Breast epithelium (tissue), 4 donors: ENCODE measurements at regions of chr18 and their contacts with region 1.

Region 1: DNA sequence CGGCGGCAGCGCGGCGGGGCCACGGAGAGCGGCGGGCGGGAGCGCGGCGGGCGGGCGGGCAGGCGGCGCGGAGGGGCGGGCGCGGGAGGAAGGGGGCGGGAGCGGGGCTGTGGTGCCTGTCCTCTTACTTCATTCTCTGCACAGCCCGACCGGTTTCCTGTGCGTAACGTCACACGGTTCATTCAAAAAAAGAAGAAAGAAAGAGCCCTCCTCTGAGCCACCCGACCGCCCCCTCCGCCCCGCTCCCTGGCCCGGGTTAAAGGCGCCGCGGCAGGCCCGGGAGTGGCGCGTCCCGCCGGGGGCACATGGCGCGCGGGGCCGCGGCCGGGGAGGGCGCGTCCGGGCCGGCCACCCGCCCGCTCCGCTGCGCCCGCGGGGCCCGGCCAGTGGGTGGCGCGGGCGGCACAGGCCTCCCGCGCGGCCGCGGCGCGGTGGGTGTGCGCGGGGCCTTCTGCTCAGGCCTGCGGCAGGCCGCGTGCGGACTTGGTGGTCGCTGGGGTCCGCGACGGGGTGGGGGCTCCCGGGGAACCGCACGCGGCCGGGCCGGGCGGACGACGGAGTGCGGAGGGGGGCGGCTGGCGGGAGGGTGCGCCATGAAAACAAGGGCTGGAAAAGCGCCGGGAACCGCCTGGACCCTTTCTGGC is 599 bp upstream of the BCL2 start:
- DNase-seq: peak; percentile 82 to 83
- H3K4me3 ChIP-seq: peak overlapping the region; percentile 68 to 99 (median 94)
- H3K27ac ChIP-seq: peak overlapping the region; percentile 93 to 98
- H3K4me1 ChIP-seq: peaks cover 0 to 12% of the 10 kb centered on the region in 2 donors
- H3K27me3 ChIP-seq: no peaks in the 10 kb centered on the region
- CTCF ChIP-seq: no peak
- POLR2A ChIP-seq: no peak

Region 2: DNA sequence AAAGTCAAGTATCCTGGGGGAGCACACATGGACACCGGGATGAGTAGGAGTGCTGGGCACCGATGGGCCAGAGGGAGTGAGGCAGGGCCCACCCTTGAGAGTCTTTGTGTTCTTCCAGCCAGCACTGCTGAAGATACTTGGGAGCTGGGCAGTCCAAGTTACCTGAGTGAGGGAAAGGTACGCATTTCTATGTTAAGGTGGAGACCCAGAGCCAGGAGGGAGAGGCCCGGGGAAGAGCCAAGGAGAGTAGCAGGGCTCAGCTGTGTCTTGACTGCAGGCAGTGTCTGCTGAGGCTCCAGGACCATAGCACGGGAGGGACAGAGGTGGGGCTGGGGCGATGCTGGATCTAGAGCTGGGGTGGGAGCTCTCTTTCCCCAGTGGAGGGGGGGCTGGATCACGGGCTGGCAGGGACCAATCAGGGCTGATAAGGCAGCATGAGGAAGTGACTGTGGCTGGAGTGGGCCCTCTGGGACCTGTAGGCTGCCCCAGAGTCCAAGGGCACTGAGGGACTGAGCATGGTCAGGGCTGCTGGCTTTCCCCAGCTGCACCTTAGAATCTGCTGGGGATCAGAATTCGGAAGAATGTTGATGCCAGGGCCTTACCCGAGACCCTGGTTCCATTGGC is 315.6 kb before region 1 on chr18:
- intact Hi-C with region 1: loop called (anchors 5 kb)
- DNase-seq: no peak
- H3K4me3 ChIP-seq: no peak overlapping the region
- H3K27ac ChIP-seq: no peak overlapping the region
- H3K4me1 ChIP-seq: no peaks in the 10 kb centered on the region
- H3K27me3 ChIP-seq: no peaks in the 10 kb centered on the region
- CTCF ChIP-seq: no peak
- POLR2A ChIP-seq: no peak

Region 3: GRCh38 chr18:63131106-63131958 is 188.8 kb before region 1 on chr18:
- intact Hi-C with region 1: loop called (anchors 2 kb)
- DNase-seq: no peak
- H3K4me3 ChIP-seq: no peak overlapping the region
- H3K27ac ChIP-seq: peak overlapping the region; percentile 62 to 76
- H3K4me1 ChIP-seq: peaks cover 6 to 7% of the 10 kb centered on the region in 2 donors
- H3K27me3 ChIP-seq: no peaks in the 10 kb centered on the region
- CTCF ChIP-seq: peak; percentile 52 to 57 (median 54)
- POLR2A ChIP-seq: no peak

Region 4: DNA sequence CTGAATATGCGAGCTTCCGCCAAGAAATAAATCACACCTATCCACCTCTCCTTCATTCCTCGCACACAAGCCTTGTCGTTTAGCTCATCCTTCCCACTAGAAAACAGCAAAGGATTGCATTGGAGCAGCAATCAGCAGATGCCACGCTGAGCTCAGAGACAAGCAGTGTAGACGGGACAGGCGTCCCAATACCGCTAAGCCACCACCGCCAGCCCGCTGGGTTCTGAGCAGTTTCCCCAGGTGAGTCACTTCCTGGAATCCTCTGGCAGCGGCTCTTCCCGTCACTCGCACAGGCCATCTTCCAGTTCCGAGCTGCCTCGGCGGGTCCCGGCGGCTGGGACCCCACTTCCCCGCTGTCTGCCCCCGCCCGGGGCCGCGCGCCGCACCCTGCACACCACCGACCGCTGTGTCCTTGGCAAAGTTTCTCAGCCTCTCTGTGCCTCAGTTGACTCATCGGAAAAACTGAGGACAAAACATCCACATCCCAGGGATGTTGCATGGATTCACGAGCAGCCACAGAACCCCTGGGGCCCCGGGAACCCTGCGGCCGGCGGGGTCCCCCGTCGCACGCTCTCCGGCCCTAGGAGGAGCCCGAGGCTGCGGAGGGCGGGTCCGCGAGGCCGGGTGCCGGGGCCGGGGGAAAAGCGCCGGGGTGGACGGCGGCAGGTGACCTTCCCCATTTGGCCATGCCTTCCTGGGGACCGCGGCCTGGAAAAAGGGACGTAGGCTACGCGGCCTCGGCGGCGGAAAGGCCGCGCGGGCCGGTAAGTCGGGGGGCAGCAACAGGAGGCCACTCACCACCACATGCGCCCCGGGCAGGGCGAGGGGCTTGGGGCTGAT is 46.3 kb after region 1 on chr18:
- intact Hi-C with region 1: loop called (anchors 1 kb)
- DNase-seq: peak; percentile 54 to 64
- H3K4me3 ChIP-seq: peak overlapping the region; percentile 90 to 96 (median 92)
- H3K27ac ChIP-seq: peak overlapping the region; percentile 98 to 99
- H3K4me1 ChIP-seq: no peaks in the 10 kb centered on the region
- H3K27me3 ChIP-seq: no peaks in the 10 kb centered on the region
- CTCF ChIP-seq: no peak
- POLR2A ChIP-seq: no peak